ENCODE measurements at regions of chr14 and their contacts with region 1.

Region 1: DNA sequence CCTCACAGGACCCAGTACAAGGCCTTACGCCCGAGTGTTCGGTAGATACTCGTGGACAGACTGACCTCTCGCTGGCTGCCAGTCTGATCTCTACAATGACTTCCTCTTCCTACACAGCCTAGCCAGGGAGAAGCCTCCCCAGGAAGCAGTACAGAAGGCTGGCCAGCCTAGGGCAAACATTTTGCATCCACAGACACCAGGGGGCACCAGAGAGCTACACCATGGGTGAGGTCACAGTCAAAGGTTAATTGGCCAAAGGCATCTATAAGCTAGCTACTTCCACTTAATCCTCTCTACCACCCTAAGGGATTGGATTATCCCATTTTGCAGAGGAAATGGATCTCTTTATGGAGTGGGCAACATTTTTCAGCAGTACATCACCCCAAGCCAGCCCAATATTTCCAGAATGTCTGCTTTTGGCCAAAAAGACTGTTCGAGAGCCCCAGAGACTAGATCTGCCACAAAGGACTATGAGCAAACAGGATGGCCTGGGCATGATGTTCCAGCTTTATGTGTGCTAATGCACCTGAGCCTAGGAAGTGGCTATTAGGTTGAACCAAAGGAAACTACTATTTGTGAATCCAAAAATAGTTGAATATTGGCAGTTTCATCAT is 14.6 kb upstream of the PNMA1 start:
- DNase-seq: peak; percentile 86 to 90
- ATAC-seq: peak; percentile 65 to 79 (median 73)
- H3K4me3 ChIP-seq: peak overlapping the region in 1 of 10 donors; percentile 8
- H3K27ac ChIP-seq: peak overlapping the region in 9 of 10 donors; percentile 5 to 91 (median 59)
- H3K4me1 ChIP-seq: peaks cover 32 to 77% (median 69%) of the 10 kb centered on the region in 9 donors
- H3K27me3 ChIP-seq: no peaks in the 10 kb centered on the region
- CTCF ChIP-seq: peak; percentile 93 to 97 (median 97)

Region 2: GRCh38 chr14:73753959-73754882 is 25.4 kb after region 1 on chr14:
- intact Hi-C with region 1: loop called in 1 of 10 experiments (anchors 2 kb)
- DNase-seq: peak in 1 of 2 donors; percentile 41
- ATAC-seq: peak; percentile 2 to 39 (median 19)
- H3K4me3 ChIP-seq: peak overlapping the region in 7 of 10 donors; percentile 12 to 43 (median 22)
- H3K27ac ChIP-seq: peak overlapping the region; percentile 72 to 100 (median 98)
- H3K4me1 ChIP-seq: peaks cover 84 to 99% (median 97%) of the 10 kb centered on the region in 9 donors
- H3K27me3 ChIP-seq: no peaks in the 10 kb centered on the region
- CTCF ChIP-seq: no peak

Region 3: GRCh38 chr14:73759714-73760597 is 31.1 kb after region 1 on chr14:
- intact Hi-C with region 1: loop called in 3 of 10 experiments (anchors 2 to 5 kb)
- DNase-seq: peak; percentile 94 to 95
- ATAC-seq: peak; percentile 83 to 89 (median 86)
- H3K4me3 ChIP-seq: peak overlapping the region; percentile 54 to 90 (median 80)
- H3K27ac ChIP-seq: peak overlapping the region; percentile 93 to 100 (median 98)
- H3K4me1 ChIP-seq: peaks cover 57 to 89% (median 86%) of the 10 kb centered on the region in 9 donors
- H3K27me3 ChIP-seq: no peaks in the 10 kb centered on the region
- CTCF ChIP-seq: peak in 1 of 9 donors; percentile 8

Region 4: GRCh38 chr14:73771848-73772638 is 43.2 kb after region 1 on chr14:
- intact Hi-C with region 1: no loop called
- DNase-seq: peak in 1 of 2 donors; percentile 36
- ATAC-seq: peak; percentile 45 to 74 (median 66)
- H3K4me3 ChIP-seq: no peak overlapping the region
- H3K27ac ChIP-seq: peak overlapping the region in 9 of 10 donors; percentile 27 to 79 (median 62)
- H3K4me1 ChIP-seq: peaks cover 35 to 100% (median 86%) of the 10 kb centered on the region in 9 donors
- H3K27me3 ChIP-seq: no peaks in the 10 kb centered on the region
- CTCF ChIP-seq: no peak

Region 5: GRCh38 chr14:73785873-73786695 is 57.3 kb after region 1 on chr14:
- intact Hi-C with region 1: loop called in 4 of 10 experiments (anchors 5 to 10 kb)
- DNase-seq: peak; percentile 65 to 73
- ATAC-seq: peak; percentile 67 to 78 (median 74)
- H3K4me3 ChIP-seq: peak overlapping the region; percentile 48 to 98 (median 76)
- H3K27ac ChIP-seq: peak overlapping the region; percentile 97 to 100 (median 98)
- H3K4me1 ChIP-seq: peaks cover 44 to 89% (median 77%) of the 10 kb centered on the region in 9 donors
- H3K27me3 ChIP-seq: no peaks in the 10 kb centered on the region
- CTCF ChIP-seq: peak in 4 of 9 donors; percentile 13 to 38 (median 26)

Region 6: DNA sequence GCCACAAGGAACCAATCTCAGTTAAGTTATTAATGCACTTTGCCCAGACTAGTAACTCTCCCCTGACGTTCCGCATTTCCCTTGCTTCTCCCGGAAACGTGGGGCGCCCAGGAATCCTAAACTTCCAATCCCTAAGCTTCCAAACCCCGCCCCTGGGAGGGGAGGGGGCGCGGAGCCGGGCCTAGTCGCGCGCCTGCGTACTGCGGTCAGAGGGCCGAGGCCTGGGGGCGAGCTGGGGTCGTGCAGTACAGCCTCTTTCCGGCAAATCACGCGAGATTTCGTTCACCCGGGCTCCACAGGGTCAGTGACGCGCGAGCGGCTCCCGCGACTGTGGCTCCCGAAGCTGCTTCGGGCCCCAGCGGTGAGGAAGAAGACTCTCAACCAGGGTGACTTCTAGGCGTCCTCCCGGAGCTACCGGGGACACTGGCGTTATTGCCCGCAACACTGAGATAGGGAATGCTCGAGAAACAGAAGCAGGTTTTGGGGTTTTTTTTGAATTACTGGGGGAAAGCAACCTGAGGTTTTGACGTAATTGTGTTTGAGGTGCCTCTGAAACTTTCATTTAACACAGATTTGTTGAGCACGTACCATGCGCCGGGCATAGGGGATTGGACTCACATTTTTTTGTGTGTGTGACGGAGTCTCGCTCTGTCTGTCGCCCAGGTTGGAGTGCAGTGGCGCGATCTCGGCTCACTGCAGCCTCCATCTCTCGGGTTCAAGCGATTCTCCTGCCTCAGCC is 123.0 kb after region 1 on chr14 and contains the start of gene PTGR2:
- intact Hi-C with region 1: no loop called
- DNase-seq: peak; percentile 95 to 97
- ATAC-seq: peak; percentile 98 to 99 (median 98)
- H3K4me3 ChIP-seq: peak within 1 kb of the TSS; percentile 49 to 82 (median 62)
- H3K27ac ChIP-seq: peak within 1 kb of the TSS; percentile 76 to 97 (median 93)
- H3K4me1 ChIP-seq: peaks cover 4 to 17% (median 15%) of the 10 kb centered on the region in 9 donors
- H3K27me3 ChIP-seq: no peaks in the 10 kb centered on the region
- CTCF ChIP-seq: peak in 2 of 9 donors; percentile 14 to 18
- total RNA-seq, gene PTGR2: 24.8 to 48.7 (median 36.7) TPM

Measured in heart right ventricle (tissue), 16 donors.